CD4-positive, alpha-beta T cell (primary cell): ENCODE measurements at regions of chr9 and their contacts with region 1.

Region 1: GRCh38 chr9:89542401-89543021 is 44.6 kb upstream of the SEMA4D start:
- DNase-seq: no peak
- ATAC-seq: no peak
- H3K4me3 ChIP-seq: no peak overlapping the region
- H3K4me3 Mint-ChIP-seq: no peak overlapping the region
- H3K27ac ChIP-seq: no peak overlapping the region
- H3K27ac Mint-ChIP-seq: peak overlapping the region; percentile 30
- H3K4me1 ChIP-seq: peaks cover 50% of the 10 kb centered on the region
- H3K4me1 Mint-ChIP-seq: peaks cover 72% of the 10 kb centered on the region
- H3K27me3 ChIP-seq: no peaks in the 10 kb centered on the region
- H3K27me3 Mint-ChIP-seq: no peaks in the 10 kb centered on the region
- CTCF ChIP-seq: no peak

Region 2: DNA sequence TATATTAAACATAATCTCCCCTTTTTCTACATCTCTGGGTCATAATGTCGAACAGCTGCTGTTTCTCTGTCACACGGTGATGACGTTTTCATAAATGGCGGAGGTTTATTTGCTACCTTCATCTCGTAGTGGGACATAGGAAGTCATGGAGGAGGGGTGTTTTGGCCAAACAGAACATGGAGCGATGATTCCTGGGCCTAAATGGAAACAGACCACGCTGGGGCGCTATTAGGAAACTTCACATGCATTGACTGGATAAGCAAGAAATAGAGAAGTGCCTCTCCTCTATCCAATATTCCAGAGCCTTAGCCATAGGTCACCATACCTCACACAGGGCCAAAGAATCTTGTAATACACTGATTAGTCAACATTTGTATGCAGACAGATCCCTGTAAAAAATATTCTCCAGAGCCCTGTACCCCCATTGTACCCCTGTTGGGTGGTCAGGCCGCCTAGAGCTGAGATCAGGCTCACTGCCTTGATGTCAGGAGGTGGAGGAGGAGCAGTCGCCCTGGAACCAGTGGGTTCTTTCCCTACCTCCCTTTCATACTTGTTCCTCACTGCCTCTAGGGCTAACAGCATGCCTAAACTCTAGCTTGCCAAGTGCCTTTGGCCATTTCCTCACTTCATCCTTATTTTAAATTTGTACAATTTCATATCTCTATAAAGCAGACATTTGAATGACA is 1232.1 kb before region 1 on chr9:
- CTCF ChIA-PET with region 1: no interaction called
- POLR2A ChIA-PET with region 1: no interaction called
- intact Hi-C with region 1: no loop called
- DNase-seq: no peak
- ATAC-seq: no peak
- H3K4me3 ChIP-seq: no peak overlapping the region
- H3K4me3 Mint-ChIP-seq: no peak overlapping the region
- H3K27ac ChIP-seq: no peak overlapping the region
- H3K27ac Mint-ChIP-seq: no peak overlapping the region
- H3K4me1 ChIP-seq: peaks cover 19% of the 10 kb centered on the region
- H3K4me1 Mint-ChIP-seq: peaks cover 27% of the 10 kb centered on the region
- H3K27me3 ChIP-seq: no peaks in the 10 kb centered on the region
- H3K27me3 Mint-ChIP-seq: no peaks in the 10 kb centered on the region
- CTCF ChIP-seq: no peak

Region 3: DNA sequence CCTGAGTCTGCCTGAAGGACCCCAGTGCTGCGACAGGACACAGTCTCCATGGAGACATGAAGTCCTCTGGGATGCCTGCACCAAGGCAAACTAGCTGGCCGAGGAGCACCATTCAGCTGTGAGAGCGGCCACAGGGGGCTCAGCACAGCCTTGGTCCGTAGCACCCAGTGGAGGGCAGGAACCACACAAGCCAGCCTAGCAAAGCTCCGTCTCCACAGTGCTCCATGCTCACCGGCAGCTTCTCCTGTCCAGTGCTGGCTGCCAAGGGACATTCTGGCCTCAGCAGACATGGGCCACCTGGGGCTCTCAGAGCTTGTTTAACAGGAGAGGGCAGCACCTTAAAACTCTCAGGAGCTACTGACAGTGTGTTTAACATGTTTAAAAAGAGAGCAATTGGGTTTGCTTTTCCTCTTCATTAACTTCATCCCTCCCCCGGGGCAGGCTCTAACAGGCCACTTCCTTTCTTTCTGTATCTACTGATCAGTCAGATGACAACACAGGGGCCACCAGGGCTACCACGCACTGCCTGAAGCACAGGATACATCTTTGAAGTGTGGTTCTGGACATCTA is 167.2 kb before region 1 on chr9:
- CTCF ChIA-PET with region 1: no interaction called
- POLR2A ChIA-PET with region 1: no interaction called
- intact Hi-C with region 1: loop called in 1 of 2 experiments (anchors 1 kb)
- DNase-seq: peak in 3 of 14 experiments; percentile 32 to 66 (median 40)
- ATAC-seq: no peak
- H3K4me3 ChIP-seq: no peak overlapping the region
- H3K4me3 Mint-ChIP-seq: no peak overlapping the region
- H3K27ac ChIP-seq: peak overlapping the region; percentile 27 to 35
- H3K27ac Mint-ChIP-seq: peak overlapping the region; percentile 71
- H3K4me1 ChIP-seq: peaks cover 49% of the 10 kb centered on the region
- H3K4me1 Mint-ChIP-seq: peaks cover 33% of the 10 kb centered on the region
- H3K27me3 ChIP-seq: no peaks in the 10 kb centered on the region
- H3K27me3 Mint-ChIP-seq: no peaks in the 10 kb centered on the region
- CTCF ChIP-seq: no peak

Region 4: GRCh38 chr9:89592985-89593694 is 50.6 kb after region 1 on chr9:
- CTCF ChIA-PET with region 1: no interaction called
- POLR2A ChIA-PET with region 1: no interaction called
- intact Hi-C with region 1: no loop called
- DNase-seq: no peak
- ATAC-seq: no peak
- H3K4me3 ChIP-seq: no peak overlapping the region
- H3K4me3 Mint-ChIP-seq: no peak overlapping the region
- H3K27ac ChIP-seq: no peak overlapping the region
- H3K27ac Mint-ChIP-seq: no peak overlapping the region
- H3K4me1 ChIP-seq: peaks cover 3% of the 10 kb centered on the region
- H3K4me1 Mint-ChIP-seq: no peaks in the 10 kb centered on the region
- H3K27me3 ChIP-seq: peaks cover 0 to 7% of the 10 kb centered on the region in 2 experiments
- H3K27me3 Mint-ChIP-seq: peaks cover 10% of the 10 kb centered on the region
- CTCF ChIP-seq: no peak